ENCODE measurements at regions of chr1 and their contacts with region 1.

Region 1: GRCh38 chr1:44652445-44653106 is 21.7 kb downstream of the TMEM53 start:
- DNase-seq: peak; percentile 93

Region 2: GRCh38 chr1:44377925-44378784 is 274.4 kb before region 1 on chr1:
- intact Hi-C with region 1: loop called in 1 of 2 experiments (anchors 5 kb)
- DNase-seq: no peak